IMR-90 (cell line): ENCODE measurements at regions of chr12 and their contacts with region 1.

Region 1: GRCh38 chr12:109625131-109625559 is 51.6 kb downstream of the MVK start:
- DNase-seq: peak; percentile 20
- ATAC-seq: peak; percentile 79
- H3K4me3 ChIP-seq: no peak overlapping the region
- H3K27ac ChIP-seq: no peak overlapping the region
- H3K4me1 ChIP-seq: no peaks in the 10 kb centered on the region
- H3K27me3 ChIP-seq: peaks cover 21% of the 10 kb centered on the region
- CTCF ChIP-seq: no peak
- POLR2A ChIP-seq: no peak
- RAD21 ChIP-seq: no peak

Region 2: GRCh38 chr12:109153821-109154441 is 471.2 kb before region 1 on chr12:
- CTCF ChIA-PET with region 1: no interaction called
- POLR2A ChIA-PET with region 1: no interaction called
- dilution Hi-C with region 1: no loop called
- in situ Hi-C with region 1: no loop called
- intact Hi-C with region 1: no loop called
- DNase-seq: no peak
- ATAC-seq: no peak
- H3K4me3 ChIP-seq: peak overlapping the region; percentile 46
- H3K27ac ChIP-seq: no peak overlapping the region
- H3K4me1 ChIP-seq: 0 out of 2 replicates have a peak, but pooled peaks cover 2% of the 10 kb centered on the region
- H3K27me3 ChIP-seq: peaks cover 8% of the 10 kb centered on the region
- CTCF ChIP-seq: no peak
- POLR2A ChIP-seq: no peak
- RAD21 ChIP-seq: no peak

Region 3: DNA sequence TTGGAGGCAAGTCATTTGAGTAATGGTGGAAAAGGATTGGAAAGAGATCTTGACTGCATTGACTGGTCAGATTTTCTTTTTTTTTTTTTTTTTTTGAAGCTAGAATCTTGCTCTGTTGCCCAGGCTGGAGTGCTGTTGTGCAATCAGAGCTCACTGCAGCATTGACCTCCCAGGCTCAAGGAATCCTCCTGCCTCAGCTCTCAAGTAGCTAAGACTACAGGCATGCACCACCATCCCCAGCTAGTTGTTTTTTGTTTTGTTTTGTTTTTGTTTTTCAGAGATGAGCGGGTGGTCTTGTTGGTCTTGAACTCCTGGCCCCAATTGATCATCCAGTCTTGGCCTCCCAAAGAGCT is 57.5 kb after region 1 on chr12:
- CTCF ChIA-PET with region 1: no interaction called
- POLR2A ChIA-PET with region 1: interaction called, 10 read pairs
- dilution Hi-C with region 1: no loop called
- in situ Hi-C with region 1: no loop called
- intact Hi-C with region 1: no loop called
- DNase-seq: no peak
- ATAC-seq: no peak
- H3K4me3 ChIP-seq: no peak overlapping the region
- H3K27ac ChIP-seq: no peak overlapping the region
- H3K4me1 ChIP-seq: no peaks in the 10 kb centered on the region
- H3K27me3 ChIP-seq: peaks cover 17% of the 10 kb centered on the region
- CTCF ChIP-seq: no peak
- POLR2A ChIP-seq: no peak
- RAD21 ChIP-seq: no peak

Region 4: DNA sequence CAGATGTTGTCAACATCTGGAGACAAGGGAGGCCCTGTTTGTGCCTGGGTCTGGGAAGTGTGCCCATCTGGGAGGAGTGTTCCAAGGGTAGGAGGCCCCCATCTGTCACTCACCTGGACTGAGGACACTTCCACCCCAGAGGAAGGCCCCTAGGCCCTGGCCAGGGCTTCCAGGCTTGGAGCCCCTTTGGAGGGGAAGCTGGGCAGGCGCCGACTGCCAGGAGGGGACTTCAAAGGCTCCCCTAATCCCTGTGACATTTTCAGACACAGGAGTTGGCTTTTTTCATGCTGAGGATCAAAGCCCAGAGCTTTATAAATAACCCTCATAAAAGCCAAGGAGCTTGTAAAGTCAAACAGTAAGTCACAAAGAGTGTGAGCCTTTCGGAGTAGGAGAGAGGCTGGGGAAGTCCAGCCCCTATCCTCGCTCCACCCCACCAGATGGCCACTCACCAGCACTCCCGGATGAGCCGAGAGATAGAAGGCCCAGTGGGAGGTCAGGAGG is 70.9 kb after region 1 on chr12:
- CTCF ChIA-PET with region 1: no interaction called
- POLR2A ChIA-PET with region 1: no interaction called
- dilution Hi-C with region 1: no loop called
- in situ Hi-C with region 1: no loop called
- intact Hi-C with region 1: no loop called
- DNase-seq: no peak
- ATAC-seq: peak; percentile 29; the same call in 1 of the 2 replicates
- H3K4me3 ChIP-seq: no peak overlapping the region
- H3K27ac ChIP-seq: no peak overlapping the region
- H3K4me1 ChIP-seq: no peaks in the 10 kb centered on the region
- H3K27me3 ChIP-seq: peaks cover 18% of the 10 kb centered on the region
- CTCF ChIP-seq: no peak
- POLR2A ChIP-seq: no peak
- RAD21 ChIP-seq: no peak

Region 5: DNA sequence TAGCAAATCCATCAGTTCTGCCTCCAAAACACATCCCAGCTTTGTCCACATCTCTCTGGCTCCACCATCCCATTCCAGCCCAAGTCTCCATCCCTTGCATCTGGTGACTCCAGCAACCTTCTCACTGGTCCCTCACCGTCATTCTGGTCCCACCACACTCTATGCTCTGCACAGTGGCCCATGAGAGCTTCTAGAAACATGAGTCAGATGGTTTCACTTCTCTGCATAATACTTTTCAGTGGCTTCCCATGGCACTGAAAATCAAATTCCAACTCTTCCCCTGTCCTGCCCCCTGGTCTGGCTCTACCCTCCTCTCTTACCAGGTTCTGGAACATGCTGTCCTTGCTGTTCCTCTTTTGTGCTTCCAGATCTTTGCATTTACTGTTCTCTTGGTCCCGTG is 440.4 kb after region 1 on chr12:
- CTCF ChIA-PET with region 1: no interaction called
- POLR2A ChIA-PET with region 1: no interaction called
- dilution Hi-C with region 1: no loop called
- in situ Hi-C with region 1: no loop called
- intact Hi-C with region 1: no loop called
- DNase-seq: no peak
- ATAC-seq: no peak
- H3K4me3 ChIP-seq: no peak overlapping the region
- H3K27ac ChIP-seq: no peak overlapping the region
- H3K4me1 ChIP-seq: peaks cover under 1% of the 10 kb centered on the region; the same call in 1 of the 2 replicates
- H3K27me3 ChIP-seq: no peaks in the 10 kb centered on the region
- CTCF ChIP-seq: no peak
- POLR2A ChIP-seq: no peak
- RAD21 ChIP-seq: no peak